ENCODE measurements at regions of chr10 and their contacts with region 1.

Region 1: DNA sequence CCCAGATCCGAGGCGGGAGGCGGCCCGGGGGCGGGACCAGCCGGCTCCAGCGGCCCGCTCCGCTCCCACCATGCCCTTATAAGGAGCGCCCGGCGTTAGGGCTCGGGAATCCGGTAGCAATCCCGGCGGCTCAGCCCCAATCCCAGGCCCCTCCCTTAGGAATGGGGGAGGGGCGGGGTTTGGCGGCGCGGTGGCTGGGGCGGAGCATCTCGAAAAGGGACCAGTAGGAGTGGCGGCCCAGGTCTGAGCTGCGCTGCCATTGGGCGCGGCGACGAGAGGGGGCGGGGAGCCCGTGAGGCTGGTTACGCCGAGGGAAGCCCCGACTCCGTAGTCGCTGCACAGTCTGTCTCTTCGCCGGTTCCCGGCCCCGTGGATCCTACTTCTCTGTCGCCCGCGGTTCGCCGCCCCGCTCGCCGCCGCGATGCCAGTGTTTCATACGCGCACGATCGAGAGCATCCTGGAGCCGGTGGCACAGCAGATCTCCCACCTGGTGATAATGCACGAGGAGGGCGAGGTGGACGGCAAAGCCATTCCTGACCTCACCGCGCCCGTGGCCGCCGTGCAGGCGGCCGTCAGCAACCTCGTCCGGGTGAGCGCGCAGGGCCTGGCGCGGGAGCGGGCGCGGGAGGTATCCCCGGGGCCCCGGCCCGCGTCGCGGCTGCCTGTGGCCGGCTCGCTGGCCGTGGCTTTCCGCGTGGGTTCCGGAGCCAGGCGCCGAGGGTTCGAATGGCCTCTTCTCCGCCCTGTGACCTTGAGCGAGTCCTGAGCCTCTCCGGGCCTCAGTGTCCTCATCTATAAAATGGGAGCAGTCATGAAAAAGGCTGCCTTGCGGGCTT is at the start of gene VCL:
- DNase-seq: peak; percentile 98 to 99 (median 98)
- ATAC-seq: peak; percentile 96 to 97 (median 97)
- H3K4me3 ChIP-seq: peak within 1 kb of the TSS; percentile 77 to 98 (median 94)
- H3K27ac ChIP-seq: peak within 1 kb of the TSS; percentile 78 to 99 (median 93)
- H3K4me1 ChIP-seq: peaks cover 0 to 42% (median 26%) of the 10 kb centered on the region in 12 donors
- H3K27me3 ChIP-seq: no peaks in the 10 kb centered on the region
- CTCF ChIP-seq: no peak
- POLR2A ChIP-seq: peak; percentile 84 to 99
- total RNA-seq, gene VCL: 215 to 543 (median 273) TPM

Region 2: GRCh38 chr10:74047868-74048267 is 49.9 kb after region 1 on chr10:
- intact Hi-C with region 1: loop called in 5 of 10 experiments (anchors 5 to 10 kb)
- DNase-seq: no peak
- ATAC-seq: peak in 2 of 4 donors; percentile 23 to 67
- H3K4me3 ChIP-seq: no peak overlapping the region
- H3K27ac ChIP-seq: peak overlapping the region in 10 of 12 donors; percentile 19 to 66 (median 48)
- H3K4me1 ChIP-seq: peaks cover 3 to 78% (median 48%) of the 10 kb centered on the region in 12 donors
- H3K27me3 ChIP-seq: no peaks in the 10 kb centered on the region
- CTCF ChIP-seq: no peak
- POLR2A ChIP-seq: no peak

Region 3: GRCh38 chr10:74058658-74059057 is 60.7 kb after region 1 on chr10:
- intact Hi-C with region 1: loop called in 4 of 10 experiments (anchors 10 kb)
- DNase-seq: no peak
- ATAC-seq: peak in 2 of 4 donors; percentile 28 to 58
- H3K4me3 ChIP-seq: no peak overlapping the region
- H3K27ac ChIP-seq: peak overlapping the region in 10 of 12 donors; percentile 15 to 86 (median 68)
- H3K4me1 ChIP-seq: peaks cover 3 to 72% (median 39%) of the 10 kb centered on the region in 12 donors
- H3K27me3 ChIP-seq: no peaks in the 10 kb centered on the region
- CTCF ChIP-seq: peak in 5 of 12 donors; percentile 13 to 41 (median 26)
- POLR2A ChIP-seq: no peak

Measured in heart left ventricle (tissue), 16 donors.